OCI-LY7 (cell line): ENCODE measurements at regions of chr13 and their contacts with region 1.

Region 1: GRCh38 chr13:52617070-52618060 is 24.9 kb upstream of the HNRNPA1L2 start:
- DNase-seq: peak; percentile 90
- H3K4me3 ChIP-seq: peak overlapping the region; percentile 76
- H3K27ac ChIP-seq: peak overlapping the region; percentile 45
- H3K4me1 ChIP-seq: peaks cover 25% of the 10 kb centered on the region
- CTCF ChIP-seq: no peak

Region 2: GRCh38 chr13:52652196-52652979 is 35.0 kb after region 1 on chr13 and contains the start of gene SUGT1:
- CTCF ChIA-PET with region 1: interaction called, 3 read pairs
- POLR2A ChIA-PET with region 1: interaction called, 46 read pairs
- intact Hi-C with region 1: loop called (anchors 1 kb)
- DNase-seq: peak; percentile 97
- H3K4me3 ChIP-seq: peak within 1 kb of the TSS; percentile 96
- H3K27ac ChIP-seq: peak within 1 kb of the TSS; percentile 87
- H3K4me1 ChIP-seq: peaks cover 34% of the 10 kb centered on the region
- CTCF ChIP-seq: peak; percentile 76
- total RNA-seq, gene SUGT1: 32.1 and 36.6 TPM in 2 replicates